CD8-positive, alpha-beta memory T cell (primary cell): ENCODE measurements at regions of chr15 and their contacts with region 1.

Region 1: DNA sequence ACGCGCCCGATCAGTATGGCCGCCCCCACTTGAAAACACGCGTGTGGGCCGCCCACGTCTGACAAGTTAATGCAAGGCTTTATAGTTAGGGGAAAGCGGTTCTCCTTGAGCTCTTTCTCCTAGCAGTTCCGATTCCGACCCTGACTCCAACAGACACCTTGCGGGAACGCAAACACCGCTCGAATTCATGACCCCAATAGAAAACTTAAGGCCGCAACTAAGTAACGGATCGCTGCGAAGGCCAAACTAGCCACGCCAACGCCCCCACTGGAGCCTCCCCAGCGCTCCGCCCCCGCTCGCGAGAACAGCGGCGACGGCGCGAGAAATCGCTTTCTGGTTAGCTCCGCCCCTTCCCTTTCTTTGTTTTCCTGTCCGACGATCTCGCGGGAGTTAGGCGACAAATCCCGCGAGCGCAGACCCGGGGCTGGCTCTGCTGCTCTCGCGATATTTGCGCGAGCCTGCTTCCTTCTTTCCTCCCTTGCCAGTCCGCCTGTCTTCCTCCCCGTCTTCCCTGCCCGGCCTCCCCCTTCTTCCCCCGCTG is at the start of gene IREB2:
- DNase-seq: peak; percentile 94 to 99 (median 98)
- H3K4me3 ChIP-seq: peak within 1 kb of the TSS; percentile 63
- H3K4me3 Mint-ChIP-seq: peak within 1 kb of the TSS; percentile 94 to 99 (median 97)
- H3K27ac ChIP-seq: peak within 1 kb of the TSS; percentile 94
- H3K27ac Mint-ChIP-seq: peak within 1 kb of the TSS; percentile 92 to 100 (median 96)
- H3K4me1 ChIP-seq: peaks cover 38% of the 10 kb centered on the region
- H3K4me1 Mint-ChIP-seq: peaks cover 42 to 56% (median 56%) of the 10 kb centered on the region in 3 donors
- H3K27me3 ChIP-seq: no peaks in the 10 kb centered on the region
- H3K27me3 Mint-ChIP-seq: no peaks in the 10 kb centered on the region
- total RNA-seq, gene IREB2: 62.2 to 69.3 TPM

Region 2: DNA sequence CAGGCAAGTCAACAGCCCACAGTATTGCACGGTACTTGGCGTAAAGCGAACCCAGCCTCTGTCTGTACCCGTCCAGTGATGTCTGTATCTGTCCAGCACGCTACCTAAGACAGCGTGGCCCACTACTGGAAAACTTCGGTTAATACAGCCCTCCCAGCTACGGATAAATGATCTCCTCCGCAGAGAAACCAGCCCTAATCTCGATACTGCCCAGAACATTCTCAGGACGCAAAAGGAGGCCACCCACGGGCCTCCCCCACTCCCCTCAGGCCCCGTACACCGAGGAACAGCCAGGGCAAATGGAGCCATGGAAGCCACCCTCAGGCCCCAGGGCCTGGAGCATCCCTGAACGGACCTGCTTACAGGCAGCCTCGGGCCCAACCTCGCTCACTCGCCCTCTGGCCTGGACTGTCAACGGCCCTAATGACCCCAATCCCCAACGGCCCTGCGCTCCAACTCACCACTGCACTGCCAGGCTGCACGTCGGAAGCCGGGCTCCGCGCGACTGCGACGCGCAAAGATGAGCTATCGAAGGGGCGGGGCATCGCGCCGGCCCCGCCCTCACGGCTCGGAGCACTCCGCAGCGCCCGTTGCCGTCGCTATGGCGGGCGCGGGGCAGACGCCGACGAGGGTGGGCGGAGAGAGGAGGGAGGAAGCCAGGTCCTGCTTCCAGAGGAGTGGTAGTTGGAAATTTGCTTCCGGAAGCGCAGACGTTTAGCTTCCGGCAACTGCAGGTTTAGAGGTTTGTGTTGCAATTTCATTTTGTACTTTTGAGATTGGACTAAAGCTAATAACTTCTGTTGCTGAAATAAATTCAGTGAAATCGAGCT is 138.5 kb before region 1 on chr15 and contains the start of gene SKIC8:
- CTCF ChIA-PET with region 1: interaction called, 3 read pairs
- POLR2A ChIA-PET with region 1: interaction called, 10 read pairs
- DNase-seq: peak; percentile 88 to 92 (median 89)
- H3K4me3 ChIP-seq: peak within 1 kb of the TSS; percentile 86
- H3K4me3 Mint-ChIP-seq: peak within 1 kb of the TSS; percentile 95 to 99 (median 97)
- H3K27ac ChIP-seq: peak within 1 kb of the TSS; percentile 87
- H3K27ac Mint-ChIP-seq: peak within 1 kb of the TSS; percentile 89 to 98 (median 95)
- H3K4me1 ChIP-seq: peaks cover 13% of the 10 kb centered on the region
- H3K4me1 Mint-ChIP-seq: peaks cover 25 to 43% (median 31%) of the 10 kb centered on the region in 3 donors
- H3K27me3 ChIP-seq: no peaks in the 10 kb centered on the region
- H3K27me3 Mint-ChIP-seq: peaks cover 0 to 1% of the 10 kb centered on the region in 2 donors
- total RNA-seq, gene SKIC8: 60.2 to 62.9 TPM

Region 3: DNA sequence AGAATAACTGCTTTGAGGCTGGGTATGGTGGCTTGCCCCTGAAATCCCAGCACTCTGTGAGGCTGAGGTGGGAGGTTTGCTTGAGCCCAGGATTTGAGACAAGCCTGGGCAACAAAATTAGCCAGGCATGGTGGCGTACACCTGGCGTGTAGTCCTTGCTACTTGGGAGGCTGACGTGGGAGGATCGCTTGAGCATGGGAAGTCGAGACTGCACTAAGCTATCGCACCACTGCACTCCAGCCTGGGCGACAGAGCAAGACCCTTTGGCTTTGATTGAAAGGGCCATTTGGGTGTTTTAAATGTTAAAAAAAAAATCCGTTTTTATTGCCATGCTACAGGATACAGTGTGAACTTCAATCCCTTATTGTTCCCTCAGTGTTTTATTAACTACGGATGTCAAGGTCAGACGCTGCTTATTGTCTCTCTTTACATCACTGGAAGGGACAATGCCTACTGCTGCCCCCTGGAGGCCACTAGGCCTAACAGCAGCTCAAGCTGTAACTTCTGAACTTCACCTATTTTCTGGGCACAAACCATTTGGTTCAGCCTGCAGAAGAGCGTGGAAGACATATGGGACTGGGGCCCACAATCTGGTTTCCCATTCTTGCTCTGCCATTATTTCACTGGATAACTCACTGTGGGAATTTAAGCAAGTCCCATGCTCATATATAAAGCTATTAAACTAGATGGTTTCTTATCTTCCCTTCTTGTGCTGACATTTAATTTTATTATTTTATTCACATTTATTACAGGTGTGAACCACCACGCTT is 15.1 kb before region 1 on chr15:
- CTCF ChIA-PET with region 1: interaction called, 37 read pairs
- POLR2A ChIA-PET with region 1: interaction called, 4 read pairs
- DNase-seq: peak; percentile 39 to 68 (median 49)
- H3K4me3 ChIP-seq: no peak overlapping the region
- H3K4me3 Mint-ChIP-seq: peak overlapping the region in 1 of 7 donors; percentile 20
- H3K27ac ChIP-seq: no peak overlapping the region
- H3K27ac Mint-ChIP-seq: peak overlapping the region in 1 of 8 donors; percentile 40
- H3K4me1 ChIP-seq: no peaks in the 10 kb centered on the region
- H3K4me1 Mint-ChIP-seq: peaks cover 5 to 18% (median 18%) of the 10 kb centered on the region in 3 donors
- H3K27me3 ChIP-seq: no peaks in the 10 kb centered on the region
- H3K27me3 Mint-ChIP-seq: peaks cover 8 to 17% of the 10 kb centered on the region in 2 donors

Region 4: GRCh38 chr15:78540141-78540928 is 102.5 kb after region 1 on chr15 and contains the start of gene PSMA4:
- CTCF ChIA-PET with region 1: no interaction called
- POLR2A ChIA-PET with region 1: interaction called, 17 read pairs
- DNase-seq: peak; percentile 92 to 96 (median 93)
- H3K4me3 ChIP-seq: peak within 1 kb of the TSS; percentile 98
- H3K4me3 Mint-ChIP-seq: peak within 1 kb of the TSS; percentile 89 to 99 (median 93)
- H3K27ac ChIP-seq: peak within 1 kb of the TSS; percentile 98
- H3K27ac Mint-ChIP-seq: peak within 1 kb of the TSS; percentile 94 to 100 (median 99)
- H3K4me1 ChIP-seq: peaks cover 20% of the 10 kb centered on the region
- H3K4me1 Mint-ChIP-seq: peaks cover 30 to 43% (median 39%) of the 10 kb centered on the region in 3 donors
- H3K27me3 ChIP-seq: no peaks in the 10 kb centered on the region
- H3K27me3 Mint-ChIP-seq: peaks cover 0 to 6% of the 10 kb centered on the region in 2 donors
- total RNA-seq, gene PSMA4: 228 to 239 TPM

Region 5: DNA sequence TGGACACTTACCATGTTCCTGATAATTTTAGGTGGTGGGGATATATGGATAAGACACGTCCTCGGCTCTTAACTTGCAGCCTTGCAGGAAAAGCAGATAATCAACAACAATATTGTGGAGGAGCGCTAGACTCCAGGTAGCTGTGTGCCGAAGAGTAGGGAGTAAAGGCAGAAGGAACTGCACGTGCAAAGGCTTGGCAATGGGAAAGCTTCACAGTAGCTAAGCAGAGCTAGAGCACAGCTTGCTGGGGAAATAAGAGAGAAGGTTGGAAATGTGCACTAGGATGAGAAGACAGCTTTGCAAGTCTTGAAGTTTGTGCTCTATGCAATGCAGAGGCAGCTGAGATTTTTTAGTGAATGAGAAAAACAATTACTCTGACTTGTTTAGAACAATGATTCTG is 114.8 kb after region 1 on chr15:
- CTCF ChIA-PET with region 1: no interaction called
- POLR2A ChIA-PET with region 1: no interaction called
- DNase-seq: no peak
- H3K4me3 ChIP-seq: no peak overlapping the region
- H3K4me3 Mint-ChIP-seq: no peak overlapping the region
- H3K27ac ChIP-seq: no peak overlapping the region
- H3K27ac Mint-ChIP-seq: no peak overlapping the region
- H3K4me1 ChIP-seq: no peaks in the 10 kb centered on the region
- H3K4me1 Mint-ChIP-seq: no peaks in the 10 kb centered on the region
- H3K27me3 ChIP-seq: no peaks in the 10 kb centered on the region
- H3K27me3 Mint-ChIP-seq: peaks cover 0 to 1% of the 10 kb centered on the region in 2 donors